Ascending aorta (tissue), 2 donors: ENCODE measurements at regions of chr1 and their contacts with region 1.

Region 1: GRCh38 chr1:178818416-178818815 is 52.5 kb downstream of the ANGPTL1 start:
- DNase-seq: no peak
- H3K4me3 ChIP-seq: no peak overlapping the region
- H3K27ac ChIP-seq: no peak overlapping the region
- H3K4me1 ChIP-seq: no peaks in the 10 kb centered on the region
- H3K27me3 ChIP-seq: no peaks in the 10 kb centered on the region
- CTCF ChIP-seq: no peak

Region 2: GRCh38 chr1:178684542-178685000 is 133.8 kb before region 1 on chr1:
- intact Hi-C with region 1: no loop called
- DNase-seq: no peak
- H3K4me3 ChIP-seq: no peak overlapping the region
- H3K27ac ChIP-seq: no peak overlapping the region
- H3K4me1 ChIP-seq: no peaks in the 10 kb centered on the region
- H3K27me3 ChIP-seq: no peaks in the 10 kb centered on the region
- CTCF ChIP-seq: no peak

Region 3: GRCh38 chr1:178869119-178869697 is 50.8 kb after region 1 on chr1:
- intact Hi-C with region 1: loop called (anchors 2 kb)
- DNase-seq: no peak
- H3K4me3 ChIP-seq: peak overlapping the region; percentile 41 to 60
- H3K27ac ChIP-seq: peak overlapping the region in 1 of 2 donors; percentile 53
- H3K4me1 ChIP-seq: peaks cover 0 to 2% of the 10 kb centered on the region in 2 donors
- H3K27me3 ChIP-seq: no peaks in the 10 kb centered on the region
- CTCF ChIP-seq: no peak